ENCODE measurements at regions of chr7 and their contacts with region 1.

Region 1: GRCh38 chr7:94239661-94240234 is 154.9 kb upstream of the COL1A2 start:
- DNase-seq: no peak
- H3K4me3 ChIP-seq: no peak overlapping the region
- H3K27ac ChIP-seq: no peak overlapping the region
- H3K4me1 ChIP-seq: peaks cover 8% of the 10 kb centered on the region; the same call in 1 of the 2 replicates
- H3K27me3 ChIP-seq: no peaks in the 10 kb centered on the region

Region 2: DNA sequence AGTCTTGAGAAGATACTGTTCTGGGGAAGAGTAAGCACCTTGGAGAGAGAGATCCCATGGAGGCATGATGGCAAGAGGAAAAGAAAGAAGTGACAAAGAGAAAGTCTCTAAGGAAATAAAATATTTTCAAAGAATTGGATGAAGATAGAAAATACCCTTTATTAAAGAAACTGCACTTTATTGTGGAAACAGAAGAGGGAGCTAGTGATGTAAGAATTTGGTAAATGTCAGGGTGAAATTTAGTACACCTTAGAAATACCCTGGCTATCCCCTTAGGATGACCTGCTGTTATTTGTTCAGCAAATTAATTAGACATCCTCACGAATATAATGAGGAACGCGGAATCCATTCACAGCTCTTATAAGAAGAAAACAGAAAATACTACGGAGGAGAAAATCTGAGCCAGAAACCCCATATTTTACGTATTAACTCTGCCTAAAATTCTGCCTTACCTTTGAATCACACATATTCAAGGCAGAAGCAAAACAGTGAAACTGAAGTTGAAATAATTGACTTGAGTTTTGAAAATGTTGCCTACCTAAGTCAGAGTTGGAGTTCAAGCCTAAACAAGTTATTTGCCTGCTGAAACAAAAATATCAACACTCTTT is 439.9 kb before region 1 on chr7:
- in situ Hi-C with region 1: loop called (anchors 25 kb)
- DNase-seq: peak; percentile 44
- H3K4me3 ChIP-seq: no peak overlapping the region
- H3K27ac ChIP-seq: no peak overlapping the region
- H3K4me1 ChIP-seq: no peaks in the 10 kb centered on the region
- H3K27me3 ChIP-seq: no peaks in the 10 kb centered on the region